Breast epithelium (tissue), 4 donors: ENCODE measurements at regions of chrX and their contacts with region 1.

Region 1: DNA sequence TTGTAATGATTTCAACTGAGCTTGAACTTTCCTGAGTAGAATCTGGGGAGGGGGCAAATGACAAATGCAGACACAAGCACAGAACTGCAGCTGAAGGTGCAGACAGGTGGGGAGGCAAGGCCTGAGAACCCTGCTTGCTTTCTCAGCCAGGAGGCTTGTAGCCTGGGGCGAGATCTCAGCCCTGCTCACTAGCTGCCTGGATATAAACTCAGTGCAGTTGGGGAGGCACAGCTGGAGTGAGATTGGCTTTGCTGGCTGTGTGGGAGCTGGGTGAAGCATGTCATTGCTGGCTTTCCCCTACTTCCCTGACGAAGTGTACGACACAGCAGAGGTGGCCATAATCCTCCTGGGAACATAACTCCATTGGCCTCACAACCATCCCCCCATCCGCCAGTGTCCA is 55.5 kb upstream of the NEXMIF start:
- DNase-seq: no peak
- H3K4me3 ChIP-seq: no peak overlapping the region
- H3K27ac ChIP-seq: no peak overlapping the region
- H3K4me1 ChIP-seq: no peaks in the 10 kb centered on the region
- H3K27me3 ChIP-seq: peaks cover 0 to 14% of the 10 kb centered on the region in 2 donors
- CTCF ChIP-seq: no peak
- POLR2A ChIP-seq: no peak

Region 2: DNA sequence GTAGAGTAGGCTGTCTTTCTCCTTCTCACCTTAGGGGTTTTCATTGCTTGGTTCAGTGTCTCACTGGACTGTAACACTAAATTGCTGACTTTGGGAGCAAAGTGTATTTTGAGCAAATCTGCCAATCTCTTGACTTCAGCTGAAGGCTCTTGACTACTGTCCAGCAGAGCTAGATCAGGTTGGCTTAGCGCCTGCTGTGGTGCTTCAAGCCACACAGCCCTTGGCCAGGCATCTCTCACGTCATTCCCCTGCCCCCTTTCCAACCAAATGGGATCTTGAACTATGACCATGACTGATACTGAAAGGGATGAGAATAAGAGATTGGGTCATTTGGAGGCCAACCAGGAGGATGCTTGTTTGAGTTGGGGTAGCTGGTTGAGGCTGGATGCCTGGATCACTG is 554.7 kb before region 1 on chrX:
- intact Hi-C with region 1: loop called (anchors 5 kb)
- DNase-seq: no peak
- H3K4me3 ChIP-seq: no peak overlapping the region
- H3K27ac ChIP-seq: no peak overlapping the region
- H3K4me1 ChIP-seq: no peaks in the 10 kb centered on the region
- H3K27me3 ChIP-seq: peaks cover 0 to 44% of the 10 kb centered on the region in 2 donors
- CTCF ChIP-seq: no peak
- POLR2A ChIP-seq: no peak

Region 3: DNA sequence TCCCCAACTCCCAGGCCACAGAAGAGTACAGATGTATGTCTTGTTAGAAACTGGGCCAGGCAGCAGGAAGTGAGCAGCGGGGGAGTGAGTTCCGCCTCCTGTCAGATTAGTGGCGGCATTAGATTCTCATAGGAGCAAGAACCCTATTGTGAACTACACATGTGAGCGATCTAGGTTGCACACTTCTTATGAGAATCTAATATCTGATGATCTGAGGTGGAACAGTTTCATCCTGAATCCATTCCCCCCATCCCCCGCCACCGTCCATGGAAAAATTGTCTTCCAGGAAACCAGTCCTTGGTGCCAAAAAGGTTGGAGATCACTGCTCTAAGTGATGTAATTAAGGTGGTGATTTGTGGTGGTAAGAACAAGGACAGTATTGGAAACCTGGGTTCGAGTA is 31.1 kb before region 1 on chrX:
- intact Hi-C with region 1: no loop called
- DNase-seq: no peak
- H3K4me3 ChIP-seq: no peak overlapping the region
- H3K27ac ChIP-seq: no peak overlapping the region
- H3K4me1 ChIP-seq: no peaks in the 10 kb centered on the region
- H3K27me3 ChIP-seq: peaks cover 0 to 5% of the 10 kb centered on the region in 2 donors
- CTCF ChIP-seq: no peak
- POLR2A ChIP-seq: no peak